AG04450 (cell line): ENCODE measurements at regions of chr18 and their contacts with region 1.

Region 1: DNA sequence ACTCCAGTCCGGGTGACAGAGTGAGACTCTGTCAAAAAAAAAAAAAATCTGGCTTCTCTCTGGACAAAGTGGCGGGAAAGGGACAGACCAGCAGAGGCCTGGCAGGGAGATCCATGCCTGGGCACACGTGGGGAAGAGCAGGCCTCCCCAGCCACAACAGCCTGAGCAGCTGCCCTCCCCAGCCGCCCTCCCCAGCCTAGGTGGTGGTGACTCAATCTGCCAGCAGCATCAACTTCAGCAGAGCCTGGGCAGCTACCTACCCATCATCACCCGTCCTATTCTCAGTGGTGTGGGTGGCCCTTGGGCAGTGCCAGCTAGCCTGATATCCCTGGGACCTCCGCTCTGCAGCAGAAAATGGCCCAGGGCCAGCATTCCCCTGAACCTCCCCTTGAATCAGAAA is 612.4 kb downstream of the FBXO15 start:
- DNase-seq: no peak
- H3K4me3 ChIP-seq: no peak overlapping the region
- H3K27ac ChIP-seq: no peak overlapping the region
- H3K27me3 ChIP-seq: no peaks in the 10 kb centered on the region
- CTCF ChIP-seq: no peak

Region 2: GRCh38 chr18:73201940-73202339 is 333.2 kb before region 1 on chr18:
- CTCF ChIA-PET with region 1: interaction called, 11 read pairs
- POLR2A ChIA-PET with region 1: no interaction called
- DNase-seq: peak; percentile 3
- H3K4me3 ChIP-seq: no peak overlapping the region
- H3K27ac ChIP-seq: no peak overlapping the region
- H3K27me3 ChIP-seq: no peaks in the 10 kb centered on the region
- CTCF ChIP-seq: no peak

Region 3: GRCh38 chr18:73235491-73235890 is 299.7 kb before region 1 on chr18:
- CTCF ChIA-PET with region 1: no interaction called
- POLR2A ChIA-PET with region 1: no interaction called
- DNase-seq: peak; percentile 86
- H3K4me3 ChIP-seq: no peak overlapping the region
- H3K27ac ChIP-seq: peak overlapping the region; percentile 40
- H3K27me3 ChIP-seq: no peaks in the 10 kb centered on the region
- CTCF ChIP-seq: no peak

Region 4: GRCh38 chr18:73520229-73520628 is 15.0 kb before region 1 on chr18:
- CTCF ChIA-PET with region 1: no interaction called
- POLR2A ChIA-PET with region 1: no interaction called
- DNase-seq: no peak
- H3K4me3 ChIP-seq: no peak overlapping the region
- H3K27ac ChIP-seq: no peak overlapping the region
- H3K27me3 ChIP-seq: no peaks in the 10 kb centered on the region
- CTCF ChIP-seq: peak; percentile 23; the same call in 1 of the 2 replicates

Region 5: DNA sequence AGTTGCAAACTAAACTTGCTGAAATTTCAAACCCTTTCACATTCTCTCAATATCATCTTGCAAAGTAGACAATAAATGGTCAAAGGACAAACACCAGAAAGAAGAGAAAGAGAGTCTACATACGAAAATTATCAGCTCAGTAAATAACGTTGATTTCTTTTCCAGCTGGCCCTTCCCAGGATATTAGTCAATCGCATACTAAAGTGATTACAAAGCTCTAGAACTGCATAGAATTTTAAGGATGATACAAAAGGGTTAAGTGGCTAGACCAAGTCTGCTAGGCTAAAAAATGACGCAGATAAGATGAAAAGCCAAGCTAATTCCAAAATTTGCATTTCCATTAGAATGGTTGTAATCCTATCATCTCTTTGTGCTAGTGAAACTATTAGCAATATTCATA is 206.8 kb after region 1 on chr18:
- CTCF ChIA-PET with region 1: no interaction called
- POLR2A ChIA-PET with region 1: no interaction called
- DNase-seq: peak; percentile 16
- H3K4me3 ChIP-seq: no peak overlapping the region
- H3K27ac ChIP-seq: no peak overlapping the region
- H3K27me3 ChIP-seq: no peaks in the 10 kb centered on the region
- CTCF ChIP-seq: no peak